MCF 10A (cell line): ENCODE measurements at regions of chr10 and their contacts with region 1.

Region 1: GRCh38 chr10:60006062-60006461 is 99.7 kb upstream of the CCDC6 start:
- DNase-seq: peak; percentile 28
- H3K4me3 Mint-ChIP-seq: no peak overlapping the region
- H3K27ac Mint-ChIP-seq: no peak overlapping the region
- H3K4me1 Mint-ChIP-seq: peaks cover 18% of the 10 kb centered on the region
- H3K27me3 Mint-ChIP-seq: no peaks in the 10 kb centered on the region
- CTCF ChIP-seq: no peak

Region 2: DNA sequence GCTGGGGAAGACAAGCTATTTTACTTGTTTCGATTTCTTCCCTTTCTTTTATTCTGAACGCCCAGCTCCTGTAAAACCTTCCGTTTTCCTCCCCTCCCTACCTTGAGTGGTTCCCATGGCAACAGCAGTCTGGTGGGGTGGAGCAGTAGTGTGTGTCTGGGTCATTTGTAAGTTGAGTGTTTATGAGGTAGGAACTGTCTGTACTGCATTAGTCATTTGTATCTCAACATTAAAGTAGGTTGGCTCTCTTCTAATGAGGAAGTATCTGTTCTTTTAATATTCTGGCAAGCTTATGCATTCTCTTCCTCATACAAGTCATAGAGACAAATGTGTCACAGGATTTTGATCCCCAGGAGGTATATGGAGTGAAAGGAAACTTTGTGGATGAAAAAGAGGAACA is 14.4 kb before region 1 on chr10:
- CTCF ChIA-PET with region 1: interaction called, 4 read pairs
- POLR2A ChIA-PET with region 1: interaction called, 12 read pairs
- intact Hi-C with region 1: no loop called
- DNase-seq: peak; percentile 57
- H3K4me3 Mint-ChIP-seq: peak overlapping the region; percentile 59
- H3K27ac Mint-ChIP-seq: peak overlapping the region; percentile 94
- H3K4me1 Mint-ChIP-seq: peaks cover 16% of the 10 kb centered on the region
- H3K27me3 Mint-ChIP-seq: no peaks in the 10 kb centered on the region
- CTCF ChIP-seq: no peak

Region 3: GRCh38 chr10:60073397-60073780 is 67.3 kb after region 1 on chr10:
- CTCF ChIA-PET with region 1: no interaction called
- POLR2A ChIA-PET with region 1: no interaction called
- intact Hi-C with region 1: no loop called
- DNase-seq: no peak
- H3K4me3 Mint-ChIP-seq: no peak overlapping the region
- H3K27ac Mint-ChIP-seq: no peak overlapping the region
- H3K4me1 Mint-ChIP-seq: no peaks in the 10 kb centered on the region
- H3K27me3 Mint-ChIP-seq: no peaks in the 10 kb centered on the region
- CTCF ChIP-seq: no peak

Region 4: DNA sequence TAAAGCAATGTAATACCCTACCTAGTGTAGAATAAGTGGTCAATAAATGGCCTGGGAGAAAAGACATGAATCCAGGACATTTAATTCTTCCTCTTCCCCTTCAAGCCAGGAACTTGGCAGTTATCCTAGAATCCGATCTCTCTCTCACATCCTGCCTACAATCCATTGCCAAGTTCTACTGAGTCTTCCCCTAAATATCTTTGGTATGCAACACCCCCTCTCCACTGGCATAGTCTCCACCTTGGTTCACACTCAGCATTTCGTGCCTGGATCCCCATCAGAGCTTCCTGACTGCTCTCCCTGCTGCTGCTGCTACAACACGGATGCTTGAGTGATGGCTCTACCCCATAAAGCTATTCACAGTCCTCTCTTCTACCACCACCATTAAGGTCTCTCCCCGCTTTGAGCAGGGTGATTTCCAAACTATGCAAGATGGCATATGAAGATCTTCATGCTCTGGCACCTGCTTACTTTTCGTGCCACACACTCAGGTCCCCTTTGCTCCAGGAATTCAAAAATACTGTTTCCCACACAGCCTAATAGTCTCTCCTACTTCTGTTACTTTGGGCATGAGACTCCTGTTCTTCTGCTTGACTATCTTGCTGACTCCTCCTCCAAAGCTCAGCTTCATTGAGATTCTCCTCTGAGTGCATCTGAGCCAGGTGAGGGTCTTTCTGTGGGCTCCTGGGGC is 378.8 kb after region 1 on chr10:
- CTCF ChIA-PET with region 1: no interaction called
- POLR2A ChIA-PET with region 1: no interaction called
- intact Hi-C with region 1: no loop called
- DNase-seq: peak; percentile 97
- H3K4me3 Mint-ChIP-seq: peak overlapping the region; percentile 20
- H3K27ac Mint-ChIP-seq: peak overlapping the region; percentile 18
- H3K4me1 Mint-ChIP-seq: peaks cover 28% of the 10 kb centered on the region
- H3K27me3 Mint-ChIP-seq: no peaks in the 10 kb centered on the region
- CTCF ChIP-seq: no peak